Endothelial cell of umbilical vein (primary cell): ENCODE measurements at regions of chr5 and their contacts with region 1.

Region 1: GRCh38 chr5:13478831-13479465 is 465.5 kb downstream of the DNAH5 start:
- DNase-seq: peak; percentile 56
- H3K4me3 ChIP-seq: no peak overlapping the region
- H3K27ac ChIP-seq: no peak overlapping the region
- H3K4me1 ChIP-seq: peaks cover 13% of the 10 kb centered on the region
- H3K27me3 ChIP-seq: peaks cover 1 to 4% of the 10 kb centered on the region in 2 experiments
- CTCF ChIP-seq: peak; percentile 36 to 46
- POLR2A ChIP-seq: no peak

Region 2: DNA sequence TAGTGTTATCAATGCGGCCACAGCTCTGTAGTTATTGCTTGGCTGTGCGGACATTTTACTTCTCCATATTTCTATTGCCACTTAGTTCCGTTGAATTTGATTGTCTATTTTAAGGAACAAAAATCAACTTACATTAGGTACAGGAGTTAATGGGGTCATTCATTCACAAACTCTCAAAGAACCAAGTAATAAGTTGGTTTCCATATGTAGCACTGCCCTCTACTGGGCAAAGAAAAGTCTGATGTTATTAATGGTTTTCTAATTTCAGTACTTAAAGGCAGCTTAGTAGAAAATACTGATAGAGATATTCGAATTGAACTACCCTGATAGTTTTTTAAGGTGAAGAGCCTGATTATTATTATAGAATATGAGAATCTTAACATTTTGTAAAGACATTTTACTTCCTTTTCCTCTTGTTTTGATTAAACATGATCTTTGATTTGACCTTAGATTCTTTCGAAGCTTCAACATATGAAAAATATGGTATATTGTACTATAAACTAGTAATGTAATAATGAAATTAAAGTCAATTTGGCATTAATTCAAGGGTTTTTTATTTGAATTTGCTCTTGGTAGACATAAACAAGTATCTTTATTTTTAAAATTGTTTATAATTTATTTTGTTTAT is 1455.2 kb before region 1 on chr5:
- CTCF ChIA-PET with region 1: interaction called, 16 read pairs
- POLR2A ChIA-PET with region 1: no interaction called
- dilution Hi-C with region 1: no loop called
- intact Hi-C with region 1: no loop called
- DNase-seq: peak; percentile 34
- H3K4me3 ChIP-seq: no peak overlapping the region
- H3K27ac ChIP-seq: no peak overlapping the region
- H3K4me1 ChIP-seq: no peaks in the 10 kb centered on the region
- H3K27me3 ChIP-seq: no peaks in the 10 kb centered on the region
- CTCF ChIP-seq: peak; percentile 25 to 28
- POLR2A ChIP-seq: no peak

Region 3: GRCh38 chr5:12704955-12705354 is 774.0 kb before region 1 on chr5:
- CTCF ChIA-PET with region 1: interaction called, 3 read pairs
- POLR2A ChIA-PET with region 1: no interaction called
- dilution Hi-C with region 1: no loop called
- intact Hi-C with region 1: loop called (anchors 1 kb)
- DNase-seq: no peak
- H3K4me3 ChIP-seq: no peak overlapping the region
- H3K27ac ChIP-seq: no peak overlapping the region
- H3K4me1 ChIP-seq: no peaks in the 10 kb centered on the region
- H3K27me3 ChIP-seq: no peaks in the 10 kb centered on the region
- CTCF ChIP-seq: no peak
- POLR2A ChIP-seq: no peak

Region 4: DNA sequence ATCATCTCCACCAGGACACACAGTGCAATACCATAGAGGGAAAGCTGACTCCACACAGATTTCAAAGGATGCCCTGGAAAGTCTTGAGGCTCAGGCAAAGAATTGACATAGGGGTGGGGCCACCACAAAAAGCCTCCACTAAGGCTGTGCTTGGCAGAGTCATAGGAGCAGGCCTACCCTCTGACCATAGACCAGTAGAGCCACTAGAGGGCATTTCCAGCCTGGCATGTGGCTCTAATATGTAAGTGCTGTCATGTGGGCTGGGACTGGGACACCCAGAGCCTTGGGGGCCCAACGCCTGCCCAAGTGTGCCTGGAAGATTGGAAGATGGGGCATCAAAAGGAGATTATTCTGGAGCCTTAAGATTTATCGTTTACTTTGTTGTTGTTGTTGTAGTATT is 260.4 kb before region 1 on chr5:
- CTCF ChIA-PET with region 1: interaction called, 3 read pairs
- POLR2A ChIA-PET with region 1: no interaction called
- dilution Hi-C with region 1: no loop called
- intact Hi-C with region 1: loop called (anchors 1 kb)
- DNase-seq: peak; percentile 19
- H3K4me3 ChIP-seq: no peak overlapping the region
- H3K27ac ChIP-seq: no peak overlapping the region
- H3K4me1 ChIP-seq: no peaks in the 10 kb centered on the region
- H3K27me3 ChIP-seq: no peaks in the 10 kb centered on the region
- CTCF ChIP-seq: peak; percentile 33 to 55
- POLR2A ChIP-seq: no peak

Region 5: DNA sequence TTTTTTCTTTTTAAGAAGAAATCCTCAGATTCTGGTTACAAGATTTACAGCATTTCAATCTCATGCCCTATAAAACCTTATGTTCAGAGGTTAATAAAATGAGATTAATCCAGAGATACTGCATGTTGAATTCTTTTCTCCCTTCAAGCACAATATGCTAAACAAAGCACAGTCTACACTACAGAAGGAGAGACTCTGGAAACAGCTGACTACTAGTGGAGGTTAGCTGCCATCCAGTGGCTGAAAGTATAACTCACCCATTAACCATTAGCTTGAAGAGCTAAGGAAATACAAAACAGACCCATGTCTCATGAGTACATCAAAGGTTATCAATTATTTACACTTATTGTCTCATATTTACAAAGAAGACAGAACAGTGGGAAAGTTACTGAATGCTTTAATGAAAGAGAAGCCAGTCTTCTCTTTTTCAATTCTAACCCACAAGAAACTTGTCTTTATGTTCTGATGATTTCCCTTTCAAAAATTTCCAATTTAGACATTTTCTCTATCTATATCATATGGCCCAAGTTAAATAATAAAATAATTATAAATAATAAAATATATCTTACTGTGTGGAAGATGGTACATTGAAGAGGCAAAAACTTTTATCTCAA is 478.2 kb after region 1 on chr5:
- CTCF ChIA-PET with region 1: interaction called, 4 read pairs
- POLR2A ChIA-PET with region 1: no interaction called
- dilution Hi-C with region 1: no loop called
- intact Hi-C with region 1: loop called (anchors 2 kb)
- DNase-seq: peak; percentile 66
- H3K4me3 ChIP-seq: no peak overlapping the region
- H3K27ac ChIP-seq: no peak overlapping the region
- H3K4me1 ChIP-seq: no peaks in the 10 kb centered on the region
- H3K27me3 ChIP-seq: peaks cover 5 to 6% of the 10 kb centered on the region in 2 experiments
- CTCF ChIP-seq: peak; percentile 39 to 54
- POLR2A ChIP-seq: no peak